ENCODE measurements at regions of chr22 and their contacts with region 1.

Region 1: GRCh38 chr22:37324340-37325038 is 42.2 kb downstream of the CYTH4 start:
- DNase-seq: no peak
- CTCF ChIP-seq: no peak

Region 2: GRCh38 chr22:37454857-37455686 is 130.6 kb after region 1 on chr22:
- in situ Hi-C with region 1: loop called (anchors 5 kb)
- DNase-seq: no peak
- CTCF ChIP-seq: no peak

Region 3: GRCh38 chr22:37519268-37520195 is 195.0 kb after region 1 on chr22 and contains the start of gene CARD10:
- in situ Hi-C with region 1: no loop called
- DNase-seq: peak; percentile 65
- CTCF ChIP-seq: no peak

Measured in GM13977 (cell line).